ENCODE measurements at regions of chr19 and their contacts with region 1.

Region 1: DNA sequence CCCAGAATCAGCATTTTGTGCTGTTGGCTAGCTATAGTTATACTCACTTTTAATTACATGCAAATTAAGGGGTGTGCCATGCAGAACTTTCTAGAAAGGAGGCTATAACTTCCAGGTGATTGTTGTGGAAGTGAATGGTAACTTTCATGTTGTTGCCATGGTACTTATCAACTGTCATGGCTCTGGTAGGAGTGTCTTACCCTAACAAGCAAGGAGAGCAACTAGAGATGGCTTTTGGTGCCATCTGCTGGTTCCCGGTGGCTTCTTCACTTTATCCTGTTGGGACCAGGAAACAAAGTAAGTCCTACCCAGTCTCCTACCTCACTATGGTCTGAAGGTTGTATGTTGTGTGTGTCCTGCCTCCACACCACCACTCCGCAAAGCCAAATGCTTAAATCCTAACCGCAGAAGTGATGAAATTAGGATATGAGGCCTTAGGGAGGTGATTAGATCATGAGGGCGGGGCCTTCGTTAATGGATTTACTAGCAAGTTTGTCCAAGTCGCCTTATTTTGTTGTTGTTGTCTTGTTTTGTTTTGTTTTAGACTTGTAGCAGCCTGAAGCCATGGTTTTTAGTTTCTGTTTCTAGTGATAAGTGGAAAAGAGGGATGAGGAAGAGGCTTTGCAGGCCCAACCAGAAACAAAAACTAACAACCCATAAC is 22.6 kb downstream of the FBXL12 start:
- DNase-seq: peak; percentile 91
- ATAC-seq: peak; percentile 45
- H3K4me3 Mint-ChIP-seq: no peak overlapping the region
- H3K27ac Mint-ChIP-seq: peak overlapping the region; percentile 5
- H3K4me1 Mint-ChIP-seq: peaks cover 22% of the 10 kb centered on the region
- H3K27me3 Mint-ChIP-seq: no peaks in the 10 kb centered on the region

Region 2: GRCh38 chr19:9309139-9309973 is 486.9 kb before region 1 on chr19 and contains the start of gene ZNF699:
- CTCF ChIA-PET with region 1: no interaction called
- POLR2A ChIA-PET with region 1: no interaction called
- intact Hi-C with region 1: loop called (anchors 2 to 10 kb)
- DNase-seq: peak; percentile 100
- ATAC-seq: peak; percentile 90
- H3K4me3 Mint-ChIP-seq: peak within 1 kb of the TSS; percentile 97
- H3K27ac Mint-ChIP-seq: peak within 1 kb of the TSS; percentile 97
- H3K4me1 Mint-ChIP-seq: peaks cover 13% of the 10 kb centered on the region
- H3K27me3 Mint-ChIP-seq: no peaks in the 10 kb centered on the region
- total RNA-seq, gene ZNF699: 6.7 to 7.1 TPM

Region 3: GRCh38 chr19:9538183-9539058 is 257.8 kb before region 1 on chr19 and contains the start of gene ZNF426:
- CTCF ChIA-PET with region 1: no interaction called
- POLR2A ChIA-PET with region 1: no interaction called
- intact Hi-C with region 1: loop called in 1 of 2 experiments (anchors 5 kb)
- DNase-seq: peak; percentile 95
- ATAC-seq: peak; percentile 97
- H3K4me3 Mint-ChIP-seq: peak within 1 kb of the TSS; percentile 97
- H3K27ac Mint-ChIP-seq: peak within 1 kb of the TSS; percentile 98
- H3K4me1 Mint-ChIP-seq: peaks cover 14% of the 10 kb centered on the region
- H3K27me3 Mint-ChIP-seq: no peaks in the 10 kb centered on the region
- total RNA-seq, gene ZNF426: 10.4 to 12.3 TPM

Region 4: GRCh38 chr19:9674663-9675357 is 121.4 kb before region 1 on chr19 and contains the start of gene ZNF562:
- CTCF ChIA-PET with region 1: no interaction called
- POLR2A ChIA-PET with region 1: no interaction called
- intact Hi-C with region 1: loop called (anchors 1 to 2 kb)
- DNase-seq: peak; percentile 91
- ATAC-seq: peak; percentile 78
- H3K4me3 Mint-ChIP-seq: peak within 1 kb of the TSS; percentile 94
- H3K27ac Mint-ChIP-seq: peak within 1 kb of the TSS; percentile 97
- H3K4me1 Mint-ChIP-seq: peaks cover 30% of the 10 kb centered on the region
- H3K27me3 Mint-ChIP-seq: no peaks in the 10 kb centered on the region
- total RNA-seq, gene ZNF562: 29.9 to 39.7 TPM

Region 5: GRCh38 chr19:9690746-9691145 is 105.5 kb before region 1 on chr19:
- CTCF ChIA-PET with region 1: no interaction called
- POLR2A ChIA-PET with region 1: no interaction called
- intact Hi-C with region 1: no loop called
- DNase-seq: no peak
- ATAC-seq: no peak
- H3K4me3 Mint-ChIP-seq: no peak overlapping the region
- H3K27ac Mint-ChIP-seq: no peak overlapping the region
- H3K4me1 Mint-ChIP-seq: no peaks in the 10 kb centered on the region
- H3K27me3 Mint-ChIP-seq: peaks cover 1% of the 10 kb centered on the region

Region 6: GRCh38 chr19:9751446-9751845 is 44.8 kb before region 1 on chr19:
- CTCF ChIA-PET with region 1: no interaction called
- POLR2A ChIA-PET with region 1: no interaction called
- intact Hi-C with region 1: no loop called
- DNase-seq: no peak
- ATAC-seq: no peak
- H3K4me3 Mint-ChIP-seq: no peak overlapping the region
- H3K27ac Mint-ChIP-seq: no peak overlapping the region
- H3K4me1 Mint-ChIP-seq: no peaks in the 10 kb centered on the region
- H3K27me3 Mint-ChIP-seq: no peaks in the 10 kb centered on the region

Region 7: DNA sequence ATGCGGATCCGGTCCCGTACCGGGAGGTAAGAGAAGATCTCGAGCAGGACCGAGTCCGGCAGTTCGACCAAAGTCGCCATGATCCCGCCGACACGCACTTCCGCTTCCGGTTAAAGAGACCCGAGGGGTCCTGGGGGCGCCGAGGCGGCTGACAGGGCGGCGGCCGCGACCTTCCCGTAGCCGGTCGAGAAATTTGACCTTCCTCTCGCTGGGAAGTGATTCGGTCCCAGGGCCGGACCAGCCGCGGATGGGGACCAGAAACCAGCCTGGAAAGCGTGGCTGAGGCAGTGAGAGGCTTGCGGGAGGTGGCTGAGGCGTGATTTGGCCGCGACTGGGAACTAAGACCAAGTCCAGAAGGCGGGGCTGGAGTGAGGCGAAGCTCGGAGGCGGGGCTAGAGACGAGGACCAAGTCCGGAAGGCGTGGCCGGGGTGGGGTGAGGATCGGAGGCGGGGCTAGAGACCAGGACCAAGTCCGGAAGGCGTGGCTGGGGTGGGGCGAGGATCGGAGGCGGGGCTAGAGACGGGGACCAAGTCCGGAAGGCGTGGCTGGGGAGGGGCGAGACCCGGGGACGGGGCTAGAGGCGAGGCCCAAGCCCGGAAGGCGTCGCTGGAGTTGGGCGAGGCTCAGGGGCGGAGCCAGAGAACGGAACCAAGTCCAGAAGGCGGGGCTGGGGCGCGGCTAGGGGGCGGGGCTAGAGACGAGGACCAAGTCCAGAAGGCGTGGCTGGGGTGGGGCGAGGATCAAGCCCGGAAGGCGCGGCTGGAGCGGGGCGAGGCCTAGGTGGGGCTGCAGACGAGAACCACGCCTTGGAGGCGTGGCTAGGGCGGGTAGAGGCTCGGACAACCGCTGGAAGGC is 22.7 kb after region 1 on chr19 and contains the start of gene FBXL12:
- CTCF ChIA-PET with region 1: interaction called, 3 read pairs
- POLR2A ChIA-PET with region 1: interaction called, 4 read pairs
- intact Hi-C with region 1: loop called (anchors 1 kb)
- DNase-seq: peak; percentile 100
- ATAC-seq: peak; percentile 92
- H3K4me3 Mint-ChIP-seq: peak within 1 kb of the TSS; percentile 88
- H3K27ac Mint-ChIP-seq: peak within 1 kb of the TSS; percentile 90
- H3K4me1 Mint-ChIP-seq: peaks cover 26% of the 10 kb centered on the region
- H3K27me3 Mint-ChIP-seq: no peaks in the 10 kb centered on the region
- total RNA-seq, gene FBXL12: 19.9 to 22.5 TPM

Region 8: DNA sequence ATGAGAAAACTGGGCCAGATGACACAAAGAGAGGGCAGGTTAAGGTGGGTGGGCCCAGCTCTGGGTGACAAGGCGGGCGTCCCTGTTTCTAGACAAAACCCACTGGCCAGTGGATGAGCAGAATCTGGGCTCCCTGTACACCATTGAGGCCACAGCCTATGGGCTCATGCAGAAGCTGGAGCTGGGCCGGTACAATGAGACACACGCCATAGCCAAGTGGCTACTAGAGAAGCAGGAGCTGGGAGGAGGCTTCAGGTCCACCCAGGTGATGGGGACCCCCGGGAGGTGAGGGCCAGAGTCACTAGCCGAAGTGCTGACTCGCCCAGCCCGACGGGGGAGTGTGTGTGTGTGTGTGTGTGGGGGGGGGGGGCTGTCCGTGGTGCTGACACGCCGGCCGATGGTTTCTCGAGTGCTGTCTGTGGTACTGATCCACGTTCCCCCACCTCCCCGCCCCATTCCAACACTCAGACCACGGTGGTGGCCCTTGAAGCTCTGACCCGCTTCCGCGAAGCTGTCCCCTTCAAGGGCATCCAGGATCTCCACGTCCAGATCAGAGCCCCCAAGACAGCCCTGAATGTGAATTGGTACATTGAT is 265.6 kb after region 1 on chr19:
- CTCF ChIA-PET with region 1: no interaction called
- POLR2A ChIA-PET with region 1: no interaction called
- intact Hi-C with region 1: no loop called
- DNase-seq: no peak
- ATAC-seq: no peak
- H3K4me3 Mint-ChIP-seq: no peak overlapping the region
- H3K27ac Mint-ChIP-seq: no peak overlapping the region
- H3K4me1 Mint-ChIP-seq: no peaks in the 10 kb centered on the region
- H3K27me3 Mint-ChIP-seq: peaks cover 9% of the 10 kb centered on the region

Region 9: DNA sequence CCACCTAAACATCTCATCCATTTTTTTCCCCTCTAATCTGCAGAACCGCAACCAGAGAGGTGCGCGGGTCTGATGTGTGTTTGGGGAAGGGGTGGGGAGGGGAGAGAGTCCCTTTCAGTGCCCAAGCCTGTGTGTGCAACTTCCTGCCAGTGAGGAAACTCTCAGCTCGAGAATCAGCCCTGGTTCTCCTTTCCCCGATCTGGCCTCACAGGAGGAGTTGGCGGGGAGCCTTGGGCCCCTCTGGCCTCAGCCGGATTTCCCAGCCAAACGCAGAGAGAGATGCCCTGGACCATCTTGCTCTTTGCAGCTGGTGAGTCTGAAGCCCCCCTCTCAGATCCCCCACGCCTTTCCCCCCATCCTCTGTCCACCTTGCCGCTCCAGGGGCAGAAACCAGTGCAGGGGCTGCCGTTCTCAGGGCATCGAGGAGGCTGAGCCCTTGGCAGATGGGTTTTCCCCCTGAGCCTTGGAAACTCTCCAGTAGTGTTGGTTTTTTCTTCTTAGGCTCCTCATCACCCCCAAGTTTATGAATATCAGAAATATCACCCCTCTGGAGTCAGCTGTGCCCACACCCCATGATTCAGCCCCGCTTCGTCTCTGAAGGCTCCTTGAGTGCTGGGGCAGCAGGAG is 1052.1 kb after region 1 on chr19 and contains the start of gene C19orf38:
- CTCF ChIA-PET with region 1: no interaction called
- POLR2A ChIA-PET with region 1: no interaction called
- intact Hi-C with region 1: no loop called
- DNase-seq: peak; percentile 35
- ATAC-seq: peak; percentile 73
- H3K4me3 Mint-ChIP-seq: peak within 1 kb of the TSS; percentile 61
- H3K27ac Mint-ChIP-seq: peak within 1 kb of the TSS; percentile 72
- H3K4me1 Mint-ChIP-seq: peaks cover 6% of the 10 kb centered on the region
- H3K27me3 Mint-ChIP-seq: no peaks in the 10 kb centered on the region
- total RNA-seq, gene C19orf38: 2.7 to 3.6 TPM

Measured in activated CD4-positive, alpha-beta T cell treated with anti-CD3 and anti-CD28 coated beads for 36 hours (primary cell).